Activated CD4-positive, alpha-beta T cell treated with anti-CD3 and anti-CD28 coated beads for 36 hours (primary cell): ENCODE measurements at regions of chr4 and their contacts with region 1.

Region 1: DNA sequence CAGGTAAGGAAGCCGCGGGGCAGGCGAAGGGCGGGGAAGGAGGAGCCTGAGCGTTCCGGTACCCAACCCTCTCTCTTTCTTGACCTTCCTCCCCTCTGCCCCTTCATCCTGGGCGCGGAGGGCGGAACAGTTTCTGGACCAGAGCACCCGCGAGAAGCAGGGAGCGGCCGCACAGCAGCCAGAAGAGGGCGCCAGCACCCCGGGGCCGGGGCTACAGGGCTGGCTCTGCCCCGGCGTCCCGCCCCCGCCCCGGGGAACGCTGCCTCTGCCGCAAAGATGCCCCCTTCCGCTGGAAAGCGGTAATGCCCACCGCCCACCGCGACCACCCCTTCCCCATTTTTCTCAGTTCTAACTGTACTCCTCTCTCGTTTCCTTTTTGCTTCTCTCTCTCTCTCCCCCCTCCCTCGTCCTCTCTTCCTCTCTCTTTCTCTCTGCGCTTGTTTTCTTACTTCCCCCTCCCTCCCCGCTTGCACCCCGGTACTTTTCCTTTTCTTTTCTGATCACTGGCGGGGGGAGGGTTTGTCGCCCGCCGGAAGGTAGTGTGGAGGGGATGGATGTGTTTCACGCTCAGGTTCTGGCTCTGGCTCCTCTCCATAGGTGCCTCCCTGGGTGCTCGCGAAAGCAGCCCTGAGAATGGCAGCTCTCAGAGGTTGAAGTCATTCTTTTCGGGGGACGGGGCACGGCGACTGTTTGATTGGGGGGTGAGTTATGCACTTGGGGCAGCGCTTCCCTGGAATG is 13.1 kb upstream of the PRDM8 start:
- DNase-seq: peak; percentile 96
- ATAC-seq: peak; percentile 82
- H3K4me3 Mint-ChIP-seq: peak overlapping the region; percentile 82
- H3K27ac Mint-ChIP-seq: peak overlapping the region; percentile 90
- H3K4me1 Mint-ChIP-seq: peaks cover 45% of the 10 kb centered on the region
- H3K27me3 Mint-ChIP-seq: peaks cover 19% of the 10 kb centered on the region

Region 2: DNA sequence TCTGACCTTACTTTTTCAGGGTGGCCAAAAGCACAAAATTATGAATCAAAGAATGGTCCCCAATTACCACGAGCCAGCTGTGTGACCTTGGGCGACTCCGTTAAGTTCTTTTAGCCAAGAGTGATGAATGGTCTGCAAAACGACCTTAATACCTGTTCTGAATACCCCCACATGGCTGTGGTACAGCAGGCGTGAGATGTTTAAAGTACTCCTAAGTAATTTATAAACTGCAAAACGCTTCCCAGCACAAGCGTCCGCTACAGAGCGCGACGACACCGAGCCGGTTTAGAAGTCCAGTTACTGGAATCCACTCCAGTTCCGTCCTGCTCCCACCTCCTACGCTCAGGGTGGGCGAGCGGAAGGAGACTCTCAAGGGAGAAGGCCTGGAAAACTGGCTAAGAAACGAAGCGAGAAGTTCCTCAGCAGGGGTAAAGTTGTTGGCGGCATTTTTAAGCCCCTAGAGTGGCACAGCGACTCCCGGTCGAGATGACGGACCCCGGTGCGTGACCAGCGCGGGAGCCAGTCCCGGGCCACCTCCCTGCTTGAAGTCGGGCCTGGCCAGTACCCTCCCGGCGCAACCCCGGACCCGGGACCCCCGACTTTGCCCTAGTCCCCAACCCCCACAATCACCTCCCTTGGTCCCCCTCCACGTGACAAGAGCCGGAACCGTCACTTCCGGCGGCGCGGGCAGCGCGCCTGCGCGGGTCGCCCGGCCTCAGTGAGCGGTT is 1408.8 kb before region 1 on chr4:
- CTCF ChIA-PET with region 1: no interaction called
- POLR2A ChIA-PET with region 1: no interaction called
- intact Hi-C with region 1: loop called in 1 of 2 experiments (anchors 10 kb)
- DNase-seq: peak; percentile 91
- ATAC-seq: peak; percentile 75
- H3K4me3 Mint-ChIP-seq: peak overlapping the region; percentile 84
- H3K27ac Mint-ChIP-seq: peak overlapping the region; percentile 96
- H3K4me1 Mint-ChIP-seq: peaks cover 17% of the 10 kb centered on the region
- H3K27me3 Mint-ChIP-seq: no peaks in the 10 kb centered on the region

Region 3: DNA sequence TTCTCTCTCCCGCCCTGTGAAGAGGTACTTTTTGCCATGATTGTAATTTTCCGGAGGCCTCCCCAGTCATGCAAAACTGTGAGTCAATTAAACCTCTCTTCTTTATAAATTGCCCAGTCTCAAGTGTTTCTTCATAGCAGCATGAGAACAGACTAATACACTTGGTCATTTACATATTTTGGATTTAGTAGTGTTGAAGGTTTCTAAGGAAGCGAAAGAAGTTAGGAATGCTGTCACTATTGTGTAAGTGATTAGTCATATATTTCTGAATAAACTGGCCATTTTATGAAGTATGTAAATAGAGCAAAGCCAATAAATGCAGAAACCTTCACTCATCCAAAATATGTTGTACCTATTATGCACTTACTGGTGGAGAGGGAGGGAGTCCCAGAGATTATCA is 741.8 kb before region 1 on chr4:
- CTCF ChIA-PET with region 1: no interaction called
- POLR2A ChIA-PET with region 1: no interaction called
- intact Hi-C with region 1: no loop called
- DNase-seq: no peak
- ATAC-seq: no peak
- H3K4me3 Mint-ChIP-seq: no peak overlapping the region
- H3K27ac Mint-ChIP-seq: no peak overlapping the region
- H3K4me1 Mint-ChIP-seq: no peaks in the 10 kb centered on the region
- H3K27me3 Mint-ChIP-seq: peaks cover 7% of the 10 kb centered on the region

Region 4: DNA sequence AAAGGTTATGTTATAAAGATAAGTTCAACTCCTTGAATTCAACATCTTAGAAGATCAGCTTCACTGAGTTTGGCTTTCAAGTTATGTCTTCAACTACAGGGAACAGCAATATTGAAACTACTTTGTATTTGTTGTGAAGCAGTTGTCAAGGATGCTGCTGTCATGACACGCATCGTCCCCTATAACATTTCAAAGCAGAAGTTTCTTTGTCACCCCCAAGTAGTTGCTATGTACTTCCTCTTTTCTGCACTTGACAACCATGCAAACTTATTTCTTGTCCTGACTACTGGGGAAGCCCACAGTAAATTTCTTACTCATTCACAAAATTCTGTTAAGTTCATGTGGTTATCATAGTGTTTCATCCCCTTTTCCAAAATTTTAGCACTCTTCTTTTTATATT is 125.5 kb before region 1 on chr4:
- CTCF ChIA-PET with region 1: interaction called, 5 read pairs
- POLR2A ChIA-PET with region 1: interaction called, 4 read pairs
- intact Hi-C with region 1: loop called (anchors 1 to 5 kb)
- DNase-seq: peak; percentile 59
- ATAC-seq: peak; percentile 86
- H3K4me3 Mint-ChIP-seq: peak overlapping the region; percentile 68
- H3K27ac Mint-ChIP-seq: peak overlapping the region; percentile 89
- H3K4me1 Mint-ChIP-seq: peaks cover 54% of the 10 kb centered on the region
- H3K27me3 Mint-ChIP-seq: no peaks in the 10 kb centered on the region

Region 5: DNA sequence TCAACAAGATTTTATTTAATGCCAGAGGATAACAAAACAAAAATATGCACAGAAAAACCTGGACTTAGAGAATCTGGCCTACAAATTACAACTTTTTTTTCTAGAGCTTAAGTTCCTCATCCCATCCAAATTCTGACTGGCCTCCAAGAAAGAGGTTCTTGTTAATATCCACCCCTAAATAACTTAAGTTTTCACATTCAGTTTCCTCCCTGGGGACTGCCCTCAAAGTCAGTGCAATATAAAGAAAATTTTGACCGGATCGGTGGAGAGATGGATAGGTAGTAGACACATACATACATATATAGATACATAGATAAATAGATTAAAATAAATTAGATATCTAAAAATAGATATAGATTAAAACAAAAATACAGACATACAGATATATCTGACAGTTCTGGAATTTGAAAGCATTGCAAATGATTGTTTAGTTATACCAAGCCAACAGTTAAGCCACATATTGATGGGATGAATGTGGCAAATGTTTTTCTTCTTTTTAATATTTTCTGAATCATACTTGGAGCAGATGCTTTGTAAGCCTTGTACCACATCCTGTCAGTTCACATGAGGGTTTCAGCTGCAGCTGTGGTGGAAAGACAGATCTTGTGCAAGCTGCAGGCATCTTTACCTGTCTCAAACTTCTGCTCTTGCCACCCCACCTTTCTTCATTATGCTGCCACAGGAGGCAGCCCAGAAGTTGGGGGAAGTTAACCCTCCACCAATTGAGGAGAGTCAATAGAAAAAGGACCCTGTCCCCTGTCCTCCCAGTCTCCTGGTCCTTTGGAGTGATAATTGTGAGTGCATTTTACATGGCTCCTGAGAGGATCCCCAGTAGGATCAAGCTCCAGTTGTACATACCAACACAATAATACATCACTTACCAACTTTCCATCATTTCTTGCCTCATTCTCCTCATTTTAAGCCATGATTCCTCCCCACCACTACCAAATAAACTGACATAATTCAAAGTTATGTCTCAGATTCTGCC is 45.4 kb before region 1 on chr4:
- CTCF ChIA-PET with region 1: interaction called, 14 read pairs
- POLR2A ChIA-PET with region 1: no interaction called
- intact Hi-C with region 1: loop called in 1 of 2 experiments (anchors 2 kb)
- DNase-seq: peak; percentile 74
- ATAC-seq: peak; percentile 95
- H3K4me3 Mint-ChIP-seq: no peak overlapping the region
- H3K27ac Mint-ChIP-seq: peak overlapping the region; percentile 71
- H3K4me1 Mint-ChIP-seq: peaks cover 58% of the 10 kb centered on the region
- H3K27me3 Mint-ChIP-seq: no peaks in the 10 kb centered on the region

Region 6: GRCh38 chr4:80196922-80197573 is 12.8 kb after region 1 on chr4 and contains the start of gene PRDM8:
- CTCF ChIA-PET with region 1: interaction called, 105 read pairs
- POLR2A ChIA-PET with region 1: interaction called, 4 read pairs
- intact Hi-C with region 1: loop called (anchors 1 to 2 kb)
- DNase-seq: peak; percentile 59
- ATAC-seq: peak; percentile 51
- H3K4me3 Mint-ChIP-seq: peak within 1 kb of the TSS; percentile 64
- H3K27ac Mint-ChIP-seq: no peak within 1 kb of the TSS
- H3K4me1 Mint-ChIP-seq: peaks cover 30% of the 10 kb centered on the region
- H3K27me3 Mint-ChIP-seq: peaks cover 33% of the 10 kb centered on the region
- total RNA-seq, gene PRDM8: 1.4 to 1.6 TPM

Region 7: GRCh38 chr4:81494031-81494431 is 1309.8 kb after region 1 on chr4:
- CTCF ChIA-PET with region 1: no interaction called
- POLR2A ChIA-PET with region 1: no interaction called
- intact Hi-C with region 1: loop called in 1 of 2 experiments (anchors 10 kb)
- DNase-seq: no peak
- ATAC-seq: peak; percentile 59
- H3K4me3 Mint-ChIP-seq: peak overlapping the region; percentile 28
- H3K27ac Mint-ChIP-seq: peak overlapping the region; percentile 55
- H3K4me1 Mint-ChIP-seq: peaks cover 50% of the 10 kb centered on the region
- H3K27me3 Mint-ChIP-seq: no peaks in the 10 kb centered on the region